Activated CD4-positive, alpha-beta T cell treated with anti-CD3 and anti-CD28 coated beads for 36 hours (primary cell): ENCODE measurements at regions of chr2 and their contacts with region 1.

Region 1: GRCh38 chr2:43194121-43194869 is 32.1 kb downstream of the ZFP36L2 start:
- DNase-seq: no peak
- ATAC-seq: no peak
- H3K4me3 Mint-ChIP-seq: peak overlapping the region; percentile 75
- H3K27ac Mint-ChIP-seq: peak overlapping the region; percentile 95
- H3K4me1 Mint-ChIP-seq: peaks cover 57% of the 10 kb centered on the region
- H3K27me3 Mint-ChIP-seq: no peaks in the 10 kb centered on the region

Region 2: DNA sequence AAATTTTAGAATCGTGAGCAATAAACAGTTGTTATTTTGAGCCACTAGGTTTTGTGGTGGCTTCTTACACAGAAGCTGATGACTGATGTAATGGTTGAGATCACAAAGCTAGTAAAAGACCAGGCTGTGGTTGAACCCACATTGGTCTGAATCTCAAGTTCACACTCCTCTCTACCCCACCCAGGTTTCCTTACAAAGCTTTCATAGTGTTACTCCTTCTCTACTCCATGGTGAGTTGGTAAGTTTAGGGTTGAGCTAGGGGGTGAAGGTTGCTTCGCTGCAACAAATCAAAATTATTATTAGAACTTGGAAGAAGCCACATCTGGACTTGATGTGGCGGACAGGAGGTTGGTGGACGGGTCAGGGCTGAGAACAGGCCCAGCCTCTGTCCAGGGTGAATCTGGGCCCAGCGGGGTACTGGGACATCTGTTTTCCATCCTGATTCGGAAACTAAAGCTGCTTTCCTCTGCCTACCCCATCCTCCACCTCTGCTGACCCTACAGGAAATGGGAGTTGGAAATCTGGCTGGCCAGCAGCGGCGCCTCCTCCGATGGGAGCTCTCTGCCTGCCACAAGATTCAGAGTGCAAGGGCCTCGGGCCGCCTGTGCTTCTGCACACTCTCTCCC is 54.2 kb before region 1 on chr2:
- CTCF ChIA-PET with region 1: interaction called, 3 read pairs
- POLR2A ChIA-PET with region 1: no interaction called
- intact Hi-C with region 1: loop called (anchors 1 to 2 kb)
- DNase-seq: peak; percentile 38
- ATAC-seq: peak; percentile 30
- H3K4me3 Mint-ChIP-seq: peak overlapping the region; percentile 5
- H3K27ac Mint-ChIP-seq: peak overlapping the region; percentile 62
- H3K4me1 Mint-ChIP-seq: peaks cover 72% of the 10 kb centered on the region
- H3K27me3 Mint-ChIP-seq: no peaks in the 10 kb centered on the region

Region 3: GRCh38 chr2:43158259-43158880 is 35.9 kb before region 1 on chr2:
- CTCF ChIA-PET with region 1: interaction called, 3 read pairs
- POLR2A ChIA-PET with region 1: interaction called, 5 read pairs
- intact Hi-C with region 1: loop called in 1 of 2 experiments (anchors 1 kb)
- DNase-seq: peak; percentile 88
- ATAC-seq: peak; percentile 70
- H3K4me3 Mint-ChIP-seq: peak overlapping the region; percentile 63
- H3K27ac Mint-ChIP-seq: peak overlapping the region; percentile 96
- H3K4me1 Mint-ChIP-seq: peaks cover 60% of the 10 kb centered on the region
- H3K27me3 Mint-ChIP-seq: no peaks in the 10 kb centered on the region

Region 4: GRCh38 chr2:43169987-43170386 is 24.3 kb before region 1 on chr2:
- CTCF ChIA-PET with region 1: interaction called, 62 read pairs
- POLR2A ChIA-PET with region 1: interaction called, 17 read pairs
- intact Hi-C with region 1: loop called (anchors 1 kb)
- DNase-seq: peak; percentile 85
- ATAC-seq: peak; percentile 27
- H3K4me3 Mint-ChIP-seq: peak overlapping the region; percentile 24
- H3K27ac Mint-ChIP-seq: peak overlapping the region; percentile 91
- H3K4me1 Mint-ChIP-seq: peaks cover 79% of the 10 kb centered on the region
- H3K27me3 Mint-ChIP-seq: no peaks in the 10 kb centered on the region

Region 5: GRCh38 chr2:43178602-43179542 is 15.4 kb before region 1 on chr2:
- CTCF ChIA-PET with region 1: interaction called, 62 read pairs
- POLR2A ChIA-PET with region 1: interaction called, 17 read pairs
- intact Hi-C with region 1: loop called (anchors 1 kb)
- DNase-seq: peak; percentile 57
- ATAC-seq: peak; percentile 10
- H3K4me3 Mint-ChIP-seq: peak overlapping the region; percentile 16
- H3K27ac Mint-ChIP-seq: peak overlapping the region; percentile 90
- H3K4me1 Mint-ChIP-seq: peaks cover 69% of the 10 kb centered on the region
- H3K27me3 Mint-ChIP-seq: no peaks in the 10 kb centered on the region

Region 6: GRCh38 chr2:43219383-43220228 is 25.3 kb after region 1 on chr2:
- CTCF ChIA-PET with region 1: interaction called, 26 read pairs
- POLR2A ChIA-PET with region 1: interaction called, 5 read pairs
- intact Hi-C with region 1: loop called (anchors 1 kb)
- DNase-seq: peak; percentile 88
- ATAC-seq: peak; percentile 69
- H3K4me3 Mint-ChIP-seq: peak overlapping the region; percentile 83
- H3K27ac Mint-ChIP-seq: peak overlapping the region; percentile 98
- H3K4me1 Mint-ChIP-seq: peaks cover 46% of the 10 kb centered on the region
- H3K27me3 Mint-ChIP-seq: no peaks in the 10 kb centered on the region

Region 7: GRCh38 chr2:43358410-43359201 is 164.3 kb after region 1 on chr2:
- CTCF ChIA-PET with region 1: no interaction called
- POLR2A ChIA-PET with region 1: no interaction called
- intact Hi-C with region 1: no loop called
- DNase-seq: no peak
- ATAC-seq: no peak
- H3K4me3 Mint-ChIP-seq: no peak overlapping the region
- H3K27ac Mint-ChIP-seq: no peak overlapping the region
- H3K4me1 Mint-ChIP-seq: no peaks in the 10 kb centered on the region
- H3K27me3 Mint-ChIP-seq: no peaks in the 10 kb centered on the region